ENCODE measurements at regions of chr7 and their contacts with region 1.

Region 1: DNA sequence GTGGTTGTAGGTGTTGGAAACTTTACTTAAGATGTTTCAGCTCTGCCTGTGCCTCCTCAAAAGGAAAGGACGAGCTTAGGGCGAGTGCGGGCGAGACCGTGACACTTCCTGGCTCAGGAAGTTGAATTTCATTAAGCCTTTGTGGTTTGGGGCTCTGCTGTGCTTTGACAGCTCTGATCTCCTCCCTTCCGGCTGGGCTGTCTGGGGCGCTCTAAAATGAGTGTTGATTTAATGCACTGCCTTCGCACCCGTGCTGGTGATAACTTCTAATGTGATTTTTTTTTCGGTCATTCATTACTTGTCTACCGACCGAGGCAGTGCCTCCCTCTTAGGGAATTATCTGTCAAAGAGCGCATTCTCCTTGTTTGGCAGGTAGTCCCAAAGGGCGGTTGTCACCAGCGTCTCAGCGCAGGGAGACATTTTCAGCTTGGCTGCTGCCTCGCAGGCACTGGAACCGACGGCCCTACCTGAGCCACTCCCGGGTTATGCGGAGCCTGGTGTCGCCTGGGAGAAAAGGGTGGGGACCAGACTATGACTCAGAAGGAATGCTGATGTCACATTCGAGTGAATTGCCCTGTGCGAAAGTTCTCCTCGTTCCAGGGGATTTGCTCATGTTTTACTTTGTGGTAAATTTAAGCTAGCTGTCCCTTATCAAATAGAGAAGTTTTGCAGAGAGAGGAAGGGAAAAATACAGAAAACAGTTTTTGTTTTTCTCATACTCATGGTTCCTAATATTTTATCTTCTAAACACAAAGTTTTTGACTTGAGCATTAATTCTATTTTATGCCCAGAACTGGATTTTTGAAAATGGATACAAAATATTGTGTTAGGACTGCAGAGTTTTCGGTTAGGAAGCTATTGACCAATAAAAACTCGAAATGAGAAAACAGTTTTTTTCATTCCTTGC is 920 bp downstream of the TES start:
- DNase-seq: peak; percentile 59
- ATAC-seq: peak; percentile 78
- H3K4me3 ChIP-seq: peak overlapping the region; percentile 91
- H3K27ac ChIP-seq: peak overlapping the region; percentile 86
- H3K4me1 ChIP-seq: peaks cover 9% of the 10 kb centered on the region
- H3K27me3 ChIP-seq: no peaks in the 10 kb centered on the region
- CTCF ChIP-seq: no peak
- EP300 ChIP-seq: no peak
- POLR2A ChIP-seq: peak; percentile 61; the same call in 1 of the 2 replicates
- RAD21 ChIP-seq: no peak

Region 2: DNA sequence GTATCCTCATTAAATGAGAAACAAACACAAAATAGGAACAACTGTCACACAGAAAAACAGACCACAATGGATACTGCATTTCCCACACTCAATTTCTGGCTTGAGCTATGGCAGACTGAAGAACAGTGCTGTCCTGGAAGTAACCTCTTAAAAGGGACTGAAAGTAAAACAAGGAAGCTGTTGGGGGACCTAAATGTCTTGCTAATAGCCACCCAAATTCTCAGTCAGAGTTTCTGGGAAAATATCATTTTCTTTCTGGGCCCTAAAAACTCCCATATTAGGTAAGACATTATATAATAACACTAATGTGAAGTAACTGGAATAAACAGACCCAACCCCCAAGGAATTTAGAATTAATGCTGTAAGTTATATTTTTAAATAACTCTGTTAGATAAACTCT is 99.8 kb before region 1 on chr7:
- CTCF ChIA-PET with region 1: no interaction called
- POLR2A ChIA-PET with region 1: no interaction called
- RAD21 ChIA-PET with region 1: no interaction called
- SMC1A ChIA-PET with region 1: no interaction called
- in situ Hi-C with region 1: no loop called
- intact Hi-C with region 1: no loop called
- DNase-seq: no peak
- ATAC-seq: no peak
- H3K4me3 ChIP-seq: no peak overlapping the region
- H3K27ac ChIP-seq: no peak overlapping the region
- H3K4me1 ChIP-seq: no peaks in the 10 kb centered on the region
- H3K27me3 ChIP-seq: no peaks in the 10 kb centered on the region; a peak in 1 of 4 replicates
- CTCF ChIP-seq: no peak
- EP300 ChIP-seq: no peak
- POLR2A ChIP-seq: no peak
- RAD21 ChIP-seq: no peak

Region 3: GRCh38 chr7:116224492-116225098 is 13.3 kb after region 1 on chr7:
- CTCF ChIA-PET with region 1: interaction called, 22 read pairs
- POLR2A ChIA-PET with region 1: interaction called, 23 read pairs
- RAD21 ChIA-PET with region 1: interaction called, 13 read pairs
- SMC1A ChIA-PET with region 1: interaction called, 72 read pairs
- in situ Hi-C with region 1: no loop called
- intact Hi-C with region 1: no loop called
- DNase-seq: no peak
- ATAC-seq: peak; percentile 86
- H3K4me3 ChIP-seq: peak overlapping the region; percentile 53; the same call in 1 of the 2 replicates
- H3K27ac ChIP-seq: peak overlapping the region; percentile 24; the same call in 1 of the 2 replicates
- H3K4me1 ChIP-seq: peaks cover 18% of the 10 kb centered on the region
- H3K27me3 ChIP-seq: no peaks in the 10 kb centered on the region
- CTCF ChIP-seq: no peak
- EP300 ChIP-seq: peak in 1 of 2 experiments; percentile 15; a peak in 1 of 4 replicates
- POLR2A ChIP-seq: no peak
- RAD21 ChIP-seq: no peak